GM12878 (cell line): ENCODE measurements at regions of chr5 and their contacts with region 1.

Region 1: DNA sequence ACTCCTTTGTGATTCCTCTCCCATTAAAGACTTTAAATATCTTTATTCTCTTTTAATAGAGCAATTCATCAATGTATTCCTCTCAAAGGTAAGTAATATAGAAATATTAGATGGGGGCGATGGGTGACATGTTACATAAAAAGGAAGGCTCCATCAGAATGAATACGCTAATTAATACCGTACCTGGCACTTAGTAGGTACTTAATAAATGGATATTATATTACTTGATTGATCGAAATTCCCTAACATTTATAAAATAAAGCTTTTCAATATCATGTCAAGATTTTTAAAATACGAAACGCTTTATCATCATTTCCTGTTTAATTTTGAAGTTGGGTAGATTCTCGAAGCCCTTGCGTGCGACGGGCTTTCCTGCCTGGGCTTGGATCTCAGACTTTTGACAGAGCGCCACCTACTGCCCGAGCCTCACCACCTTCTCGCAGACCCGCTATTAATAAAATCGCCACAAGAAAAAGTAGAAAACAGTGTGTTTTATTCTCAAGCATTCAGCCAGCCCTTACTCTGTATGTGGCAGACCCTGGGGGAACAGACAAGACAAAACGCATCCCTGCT is 99.4 kb downstream of the C5orf15 start:
- DNase-seq: no peak
- ATAC-seq: peak; percentile 85
- H3K4me3 ChIP-seq: no peak overlapping the region
- H3K27ac ChIP-seq: no peak overlapping the region
- H3K4me1 ChIP-seq: no peaks in the 10 kb centered on the region
- H3K27me3 ChIP-seq: no peaks in the 10 kb centered on the region
- CTCF ChIP-seq: peak; percentile 77 to 88 (median 82)
- EP300 ChIP-seq: no peak
- POLR2A ChIP-seq: no peak
- RAD21 ChIP-seq: peak; percentile 81

Region 2: DNA sequence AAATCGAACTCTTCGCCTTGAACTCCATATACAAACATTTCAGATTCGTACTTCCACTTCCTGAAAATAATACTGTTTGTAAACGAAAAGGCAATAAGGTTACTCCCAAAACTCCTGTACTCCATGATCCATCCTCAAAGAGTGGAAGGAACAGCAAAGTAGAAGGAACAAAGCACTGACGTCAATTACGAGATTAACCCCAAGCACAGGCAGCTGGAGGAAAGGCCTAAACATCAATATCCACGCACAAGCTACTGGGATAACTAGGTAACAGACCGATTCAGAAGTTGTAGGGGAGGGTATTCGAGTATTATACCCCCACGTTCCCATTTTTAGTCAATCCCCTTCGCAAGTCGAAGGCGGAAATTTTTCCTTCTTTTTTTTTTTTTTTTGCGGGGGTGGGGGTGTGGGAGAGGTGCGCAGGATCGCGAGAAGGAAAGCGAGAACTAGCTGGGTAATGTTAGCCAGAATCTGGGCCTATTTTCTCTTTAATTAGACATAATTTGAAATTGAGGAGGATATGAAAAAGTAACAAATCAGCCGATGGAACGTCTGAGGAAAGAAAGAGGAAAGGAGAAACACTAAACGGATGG is 906.5 kb before region 1 on chr5:
- CTCF ChIA-PET with region 1: no interaction called
- POLR2A ChIA-PET with region 1: no interaction called
- RAD21 ChIA-PET with region 1: no interaction called
- SMC1A ChIA-PET with region 1: no interaction called
- in situ Hi-C with region 1: no loop called
- intact Hi-C with region 1: no loop called
- DNase-seq: no peak
- ATAC-seq: peak; percentile 16
- H3K4me3 ChIP-seq: peak overlapping the region; percentile 67
- H3K27ac ChIP-seq: peak overlapping the region; percentile 69
- H3K4me1 ChIP-seq: 0 out of 2 replicates have a peak, but pooled peaks cover 2% of the 10 kb centered on the region
- H3K27me3 ChIP-seq: no peaks in the 10 kb centered on the region
- CTCF ChIP-seq: no peak
- EP300 ChIP-seq: no peak
- POLR2A ChIP-seq: no peak
- RAD21 ChIP-seq: no peak

Region 3: DNA sequence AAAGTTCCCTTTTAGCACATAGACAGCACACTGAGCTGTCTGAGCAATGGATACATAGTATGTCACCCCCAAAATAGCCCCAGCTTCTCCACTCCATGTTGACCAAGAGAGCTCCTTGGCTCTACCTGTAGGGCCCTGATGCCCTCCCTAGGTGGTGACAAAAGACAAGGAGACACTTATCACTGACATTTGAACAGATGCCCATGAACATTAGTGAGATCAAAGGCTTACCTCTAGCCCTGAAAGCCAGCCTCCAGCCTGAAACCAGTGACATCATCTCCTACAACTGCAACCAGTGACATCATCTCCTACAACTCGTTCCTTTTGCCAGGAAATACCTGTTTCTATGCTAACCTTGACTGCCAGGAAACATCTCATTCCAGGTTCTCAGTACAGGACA is 379.4 kb before region 1 on chr5:
- CTCF ChIA-PET with region 1: interaction called, 3 read pairs
- POLR2A ChIA-PET with region 1: no interaction called
- RAD21 ChIA-PET with region 1: no interaction called
- SMC1A ChIA-PET with region 1: interaction called, 4 read pairs
- in situ Hi-C with region 1: no loop called
- intact Hi-C with region 1: loop called (anchors 10 kb)
- DNase-seq: no peak
- ATAC-seq: peak; percentile 96
- H3K4me3 ChIP-seq: no peak overlapping the region
- H3K27ac ChIP-seq: no peak overlapping the region
- H3K4me1 ChIP-seq: no peaks in the 10 kb centered on the region
- H3K27me3 ChIP-seq: no peaks in the 10 kb centered on the region; a peak in 2 of 4 replicates
- CTCF ChIP-seq: peak; percentile 26 to 50 (median 28); a peak in 4 of 6 replicates
- EP300 ChIP-seq: no peak
- POLR2A ChIP-seq: no peak
- RAD21 ChIP-seq: peak; percentile 68

Region 4: DNA sequence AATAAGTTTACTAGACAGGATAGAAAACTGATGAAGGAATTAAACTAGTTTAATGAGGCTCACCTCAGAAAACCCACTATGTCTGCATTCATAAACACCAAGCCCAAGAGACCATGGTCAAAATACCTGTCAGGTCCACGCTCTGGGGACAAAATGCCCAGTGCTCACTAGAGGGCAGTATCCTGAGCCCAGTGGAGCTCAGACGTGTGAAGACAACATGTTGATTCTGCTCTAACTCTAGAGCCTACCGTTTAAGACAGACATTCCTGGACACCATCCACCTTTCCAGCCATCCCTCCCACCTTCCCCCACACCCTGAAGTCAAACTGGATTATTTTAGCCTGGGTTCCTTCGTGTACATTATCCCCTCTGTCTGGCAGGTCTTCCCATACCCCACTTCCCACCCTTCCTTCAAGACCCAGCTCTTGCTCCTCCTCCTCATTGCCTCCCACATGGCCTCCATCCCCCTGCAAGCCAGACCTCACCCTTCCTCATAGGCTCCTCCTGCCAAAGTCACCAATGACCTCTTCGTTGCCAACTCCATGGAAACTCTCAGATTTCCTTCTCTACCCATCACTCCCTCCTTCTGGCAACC is 114.4 kb before region 1 on chr5:
- CTCF ChIA-PET with region 1: interaction called, 156 read pairs
- POLR2A ChIA-PET with region 1: no interaction called
- RAD21 ChIA-PET with region 1: interaction called, 43 read pairs
- SMC1A ChIA-PET with region 1: interaction called, 51 read pairs
- in situ Hi-C with region 1: no loop called
- intact Hi-C with region 1: loop called (anchors 1 kb)
- DNase-seq: peak; percentile 11
- ATAC-seq: peak; percentile 96
- H3K4me3 ChIP-seq: no peak overlapping the region
- H3K27ac ChIP-seq: no peak overlapping the region
- H3K4me1 ChIP-seq: no peaks in the 10 kb centered on the region
- H3K27me3 ChIP-seq: no peaks in the 10 kb centered on the region; a peak in 3 of 4 replicates
- CTCF ChIP-seq: peak; percentile 63 to 68 (median 65)
- EP300 ChIP-seq: no peak
- POLR2A ChIP-seq: no peak
- RAD21 ChIP-seq: peak; percentile 58

Region 5: GRCh38 chr5:133825631-133826289 is 43.3 kb before region 1 on chr5:
- CTCF ChIA-PET with region 1: interaction called, 77 read pairs
- POLR2A ChIA-PET with region 1: interaction called, 3 read pairs
- RAD21 ChIA-PET with region 1: interaction called, 49 read pairs
- SMC1A ChIA-PET with region 1: interaction called, 35 read pairs
- in situ Hi-C with region 1: no loop called
- intact Hi-C with region 1: no loop called
- DNase-seq: peak; percentile 77
- ATAC-seq: peak; percentile 72
- H3K4me3 ChIP-seq: no peak overlapping the region
- H3K27ac ChIP-seq: peak overlapping the region; percentile 6; the same call in 1 of the 2 replicates
- H3K4me1 ChIP-seq: peaks cover 33% of the 10 kb centered on the region
- H3K27me3 ChIP-seq: no peaks in the 10 kb centered on the region
- CTCF ChIP-seq: peak in 2 of 3 experiments; percentile 5 to 9; a peak in 1 of 6 replicates
- EP300 ChIP-seq: peak in 1 of 2 experiments; percentile 10; a peak in 1 of 4 replicates
- POLR2A ChIP-seq: no peak
- RAD21 ChIP-seq: no peak

Region 6: GRCh38 chr5:133881576-133882388 is 12.8 kb after region 1 on chr5:
- CTCF ChIA-PET with region 1: interaction called, 41 read pairs
- POLR2A ChIA-PET with region 1: no interaction called
- RAD21 ChIA-PET with region 1: interaction called, 19 read pairs
- SMC1A ChIA-PET with region 1: interaction called, 9 read pairs
- in situ Hi-C with region 1: no loop called
- intact Hi-C with region 1: no loop called
- DNase-seq: no peak
- ATAC-seq: no peak
- H3K4me3 ChIP-seq: no peak overlapping the region
- H3K27ac ChIP-seq: no peak overlapping the region
- H3K4me1 ChIP-seq: no peaks in the 10 kb centered on the region
- H3K27me3 ChIP-seq: peaks cover 0 to 2% of the 10 kb centered on the region in 2 experiments; a peak in 1 of 4 replicates
- CTCF ChIP-seq: no peak
- EP300 ChIP-seq: no peak
- POLR2A ChIP-seq: no peak
- RAD21 ChIP-seq: no peak

Region 7: GRCh38 chr5:133996683-133997252 is 127.7 kb after region 1 on chr5:
- CTCF ChIA-PET with region 1: interaction called, 4 read pairs
- POLR2A ChIA-PET with region 1: no interaction called
- RAD21 ChIA-PET with region 1: interaction called, 11 read pairs
- SMC1A ChIA-PET with region 1: interaction called, 4 read pairs
- in situ Hi-C with region 1: no loop called
- intact Hi-C with region 1: no loop called
- DNase-seq: no peak
- ATAC-seq: peak; percentile 53
- H3K4me3 ChIP-seq: peak overlapping the region; percentile 38; the same call in 1 of the 2 replicates
- H3K27ac ChIP-seq: no peak overlapping the region
- H3K4me1 ChIP-seq: peaks cover 25% of the 10 kb centered on the region
- H3K27me3 ChIP-seq: no peaks in the 10 kb centered on the region
- CTCF ChIP-seq: peak; percentile 67 to 72 (median 68)
- EP300 ChIP-seq: no peak
- POLR2A ChIP-seq: no peak
- RAD21 ChIP-seq: peak; percentile 33

Region 8: DNA sequence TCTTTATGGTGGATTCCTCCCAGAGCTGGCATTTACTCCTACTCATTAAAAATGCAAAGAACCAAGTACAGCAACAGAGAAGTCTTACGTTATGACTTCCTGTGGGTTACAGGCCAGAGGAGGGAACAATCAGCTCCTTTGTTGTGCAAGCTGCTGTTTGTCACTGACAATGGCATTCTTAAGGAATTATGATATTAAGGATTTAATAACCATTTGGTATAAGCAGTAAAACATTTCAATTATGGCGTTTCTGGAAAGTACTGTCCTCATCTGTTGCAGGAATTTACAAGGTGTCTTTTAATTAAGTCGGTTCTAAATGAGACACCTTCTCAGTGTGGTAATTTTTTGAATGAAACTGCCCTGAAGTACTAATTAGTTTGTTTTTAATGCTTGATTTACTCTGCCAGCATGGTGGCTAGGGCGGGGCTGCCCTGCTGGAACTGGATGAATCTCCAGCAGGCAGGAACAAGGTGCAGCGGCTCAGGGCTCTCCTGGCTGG is 184.9 kb after region 1 on chr5:
- CTCF ChIA-PET with region 1: no interaction called
- POLR2A ChIA-PET with region 1: no interaction called
- RAD21 ChIA-PET with region 1: no interaction called
- SMC1A ChIA-PET with region 1: no interaction called
- in situ Hi-C with region 1: no loop called
- intact Hi-C with region 1: no loop called
- DNase-seq: no peak
- ATAC-seq: peak; percentile 89
- H3K4me3 ChIP-seq: no peak overlapping the region
- H3K27ac ChIP-seq: no peak overlapping the region
- H3K4me1 ChIP-seq: peaks cover 11% of the 10 kb centered on the region
- H3K27me3 ChIP-seq: no peaks in the 10 kb centered on the region
- CTCF ChIP-seq: no peak
- EP300 ChIP-seq: no peak; a peak in 1 of 4 replicates
- POLR2A ChIP-seq: no peak
- RAD21 ChIP-seq: no peak